Lower leg skin (tissue), 4 donors: ENCODE measurements at regions of chr1 and their contacts with region 1.

Region 1: GRCh38 chr1:161726596-161727457 is 5.5 kb downstream of the FCRLB start:
- DNase-seq: peak; percentile 85 to 97
- H3K4me3 ChIP-seq: peak overlapping the region; percentile 55
- CTCF ChIP-seq: no peak
- POLR2A ChIP-seq: no peak

Region 2: DNA sequence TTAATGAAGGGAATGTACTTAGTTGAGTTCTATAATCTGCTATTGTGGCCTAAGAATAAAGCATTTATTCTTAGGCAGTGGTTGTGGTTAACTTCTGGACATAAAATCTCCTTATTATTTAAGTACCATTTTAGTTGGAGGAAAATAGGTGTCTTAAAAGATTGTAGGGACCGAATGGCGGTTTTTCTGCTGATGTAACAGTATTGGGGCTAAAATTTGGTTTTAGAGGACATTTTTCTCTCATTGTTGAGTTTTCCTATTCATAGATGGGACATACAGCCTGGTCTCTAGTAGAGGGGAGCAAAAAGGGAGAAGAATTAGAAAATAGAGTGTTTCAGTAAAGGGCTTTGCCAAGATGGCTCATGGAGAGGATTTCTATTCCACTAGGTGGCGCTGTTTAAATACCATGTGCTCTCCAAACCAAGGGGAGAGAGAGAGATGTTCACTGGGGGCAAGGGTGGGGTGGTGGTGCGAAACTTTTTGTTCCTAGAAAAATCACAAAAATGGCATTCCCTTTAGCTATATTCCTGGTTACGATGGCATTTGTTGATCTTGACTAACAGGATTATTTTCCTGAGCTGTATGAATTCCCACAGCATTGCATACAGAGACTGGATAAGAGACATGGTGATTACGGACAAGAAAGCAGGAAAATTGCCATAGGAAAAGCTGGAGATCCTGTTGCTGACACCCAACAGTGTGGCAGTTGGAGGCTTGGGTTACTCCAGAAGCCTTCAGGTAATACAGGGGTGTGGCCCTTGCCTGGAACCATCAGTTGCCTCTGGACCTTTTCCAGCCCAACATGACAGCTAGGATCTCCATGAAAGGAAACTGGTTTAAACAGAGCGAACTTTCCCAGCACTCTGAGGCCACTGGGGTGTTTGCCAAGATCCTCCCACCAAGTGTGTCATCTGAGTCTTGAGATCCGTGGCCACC is 239.8 kb before region 1 on chr1:
- intact Hi-C with region 1: loop called (anchors 10 kb)
- DNase-seq: peak in 1 of 2 donors; percentile 59
- H3K4me3 ChIP-seq: no peak overlapping the region
- CTCF ChIP-seq: no peak
- POLR2A ChIP-seq: no peak

Region 3: GRCh38 chr1:161921990-161922389 is 195.2 kb after region 1 on chr1:
- intact Hi-C with region 1: no loop called
- DNase-seq: no peak
- H3K4me3 ChIP-seq: no peak overlapping the region
- CTCF ChIP-seq: no peak
- POLR2A ChIP-seq: no peak